Head of caudate nucleus (tissue), 42 donors: ENCODE measurements at regions of chr1 and their contacts with region 1.

Region 1: DNA sequence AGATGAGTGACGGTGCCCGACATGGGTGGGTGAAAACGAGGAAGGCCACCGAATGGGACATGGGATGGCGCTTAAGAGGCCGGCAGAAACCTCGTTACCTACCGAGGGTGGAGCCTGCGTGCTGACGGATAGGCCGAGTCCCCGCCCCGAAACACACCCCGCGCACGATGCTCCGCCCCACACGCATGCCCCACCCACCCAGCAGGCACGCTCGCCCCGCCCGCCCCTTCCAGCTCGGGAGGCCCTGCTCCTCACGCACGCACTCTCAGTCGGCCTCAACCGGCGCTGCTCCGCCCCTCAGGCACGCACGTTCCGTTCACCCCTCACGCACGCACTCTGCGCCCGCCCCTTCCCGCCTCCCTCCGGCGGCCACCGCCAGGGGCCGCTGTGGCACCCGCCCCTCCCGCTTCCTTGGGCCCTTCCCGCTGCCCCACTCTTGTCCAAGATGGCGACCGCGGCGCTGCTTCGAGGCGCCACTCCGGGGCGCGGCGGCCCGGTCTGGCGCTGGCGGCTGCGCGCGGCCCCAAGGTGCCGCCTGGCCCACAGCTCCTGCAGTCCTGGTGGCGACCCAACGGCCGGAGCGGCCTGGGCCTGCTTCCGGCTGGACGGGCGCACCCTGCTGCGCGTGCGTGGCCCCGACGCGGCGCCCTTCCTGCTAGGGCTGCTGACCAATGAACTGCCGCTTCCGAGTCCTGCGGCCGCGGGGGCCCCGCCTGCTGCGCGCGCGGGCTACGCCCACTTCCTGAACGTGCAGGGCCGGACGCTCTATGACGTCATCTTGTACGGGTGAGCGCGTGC is at the start of gene IBA57:
- DNase-seq: peak; percentile 97 to 100 (median 99)

Region 2: DNA sequence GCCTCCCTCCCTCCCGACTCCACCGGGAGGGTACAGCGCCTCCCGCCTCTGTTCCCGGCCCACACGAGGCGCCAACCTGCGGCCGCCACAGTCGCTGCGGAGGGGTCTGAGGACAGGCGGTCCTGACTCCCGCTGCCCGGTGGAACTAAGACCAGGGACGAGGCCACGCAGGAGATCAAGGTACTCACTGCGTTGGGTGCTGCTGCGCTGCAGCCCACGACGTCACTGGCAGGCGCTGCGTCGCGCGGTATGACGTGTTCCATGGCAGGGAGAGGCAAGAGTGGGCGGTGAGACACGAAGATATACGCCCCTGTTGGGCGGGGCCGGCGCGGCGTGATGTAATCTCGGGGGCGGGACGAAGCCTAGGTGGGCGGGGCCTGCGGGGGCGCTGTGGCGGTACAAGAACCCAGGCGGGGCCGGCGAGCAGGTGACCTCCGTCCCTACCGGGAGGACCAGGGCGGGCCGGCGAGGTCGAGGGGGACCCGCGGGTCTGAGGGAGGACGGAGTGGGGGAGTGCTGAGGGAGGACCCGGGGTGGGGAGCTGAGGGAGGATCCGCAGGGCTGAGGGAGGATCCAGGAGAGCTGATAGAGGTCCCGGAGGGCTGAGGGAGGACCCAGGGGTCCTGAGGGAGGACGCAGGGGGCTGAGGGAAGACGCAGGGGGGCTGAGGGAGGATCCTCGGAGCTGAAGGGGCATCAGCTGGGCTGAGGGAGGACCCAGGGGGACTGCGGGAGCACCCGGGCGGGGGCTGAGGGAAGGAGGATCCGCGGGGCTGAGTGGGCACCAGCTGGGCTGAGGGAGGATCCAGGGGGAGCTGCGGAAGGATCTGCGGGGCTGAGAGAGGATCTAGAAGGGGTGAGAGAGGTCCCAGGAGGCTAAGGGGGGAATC is 56.3 kb before region 1 on chr1 and contains the start of gene MRPL55:
- intact Hi-C with region 1: loop called (anchors 1 kb)
- DNase-seq: peak; percentile 99 to 100 (median 100)

Region 3: DNA sequence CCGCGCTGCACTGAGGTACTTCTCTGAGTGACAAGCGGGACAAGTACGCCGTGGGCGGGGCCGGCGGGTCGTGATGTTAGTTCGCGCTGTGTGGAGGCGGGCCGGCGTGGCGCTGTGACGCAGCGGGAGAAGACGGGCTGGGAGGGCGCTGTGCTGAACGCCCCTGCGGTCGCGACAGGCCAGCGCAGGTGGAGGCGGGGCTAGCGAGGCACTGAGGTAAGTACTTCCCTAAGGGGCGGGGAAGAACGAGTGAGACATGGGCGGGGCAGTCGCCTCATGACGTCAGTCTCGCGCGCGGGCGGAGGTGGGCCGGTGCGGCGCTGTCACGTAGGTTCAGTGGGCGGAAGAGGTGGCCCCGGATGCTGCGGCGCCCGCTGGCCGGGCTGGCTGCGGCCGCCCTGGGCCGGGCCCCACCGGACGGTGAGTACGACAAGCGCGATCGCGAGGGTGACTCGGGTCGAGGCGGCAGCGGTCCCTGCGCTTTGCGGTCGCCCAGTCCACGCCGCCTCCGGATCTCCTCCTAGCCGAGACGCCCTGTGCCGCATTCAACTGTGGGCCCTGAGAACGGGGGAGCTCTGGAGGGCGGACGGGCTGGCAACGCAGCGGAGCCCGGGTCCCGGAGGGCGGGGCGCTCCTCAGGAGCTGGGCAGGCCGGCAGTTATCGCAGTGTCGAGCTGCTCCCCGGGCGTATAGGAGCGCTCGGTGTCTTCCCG is 25.5 kb before region 1 on chr1 and contains the start of gene GUK1:
- intact Hi-C with region 1: loop called (anchors 2 kb)
- DNase-seq: peak; percentile 96 to 100 (median 99)

Region 4: DNA sequence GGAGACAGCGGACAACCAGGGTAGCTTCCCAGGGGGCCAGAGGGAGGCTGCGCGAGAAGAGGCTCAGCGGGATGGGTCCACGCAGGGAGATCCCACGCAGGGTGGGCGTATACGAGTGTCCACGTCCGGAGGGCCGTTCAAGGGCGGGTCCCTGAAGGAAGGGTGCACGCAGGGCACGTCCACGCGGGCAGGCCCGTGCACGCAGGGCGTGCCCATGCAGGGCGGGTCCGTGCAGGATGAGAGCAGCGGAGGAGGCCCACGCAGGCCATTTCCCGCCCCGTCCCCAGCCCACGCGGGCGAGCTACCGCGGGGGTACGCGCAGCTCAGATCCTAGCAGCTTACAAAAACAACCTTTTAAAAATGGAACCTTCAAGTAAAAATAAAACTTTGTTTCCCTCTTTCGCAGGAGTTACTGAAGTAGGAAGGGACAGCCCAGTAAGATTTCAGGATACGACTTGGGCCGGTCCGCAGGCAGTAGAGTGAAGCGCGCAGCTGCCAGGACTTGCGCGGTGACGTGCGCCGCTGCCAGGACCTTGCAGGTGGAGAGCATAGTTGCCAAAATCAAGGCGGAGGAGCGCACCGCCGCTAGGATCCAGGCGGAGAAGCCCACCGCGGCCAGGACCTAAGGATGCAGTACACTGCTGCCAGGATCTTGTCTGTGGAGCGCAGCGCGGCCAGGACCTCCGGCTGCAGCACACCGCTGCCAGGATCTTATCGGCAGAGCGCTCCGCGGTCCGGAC is 321.2 kb after region 1 on chr1:
- intact Hi-C with region 1: loop called (anchors 10 kb)
- DNase-seq: peak; percentile 66 to 95 (median 87)